Sciatic nerve (tissue), 2 donors: ENCODE measurements at regions of chr10 and their contacts with region 1.

Region 1: GRCh38 chr10:3180355-3181025 is 7.9 kb upstream of the PITRM1 start:
- DNase-seq: no peak
- ATAC-seq: no peak

Region 2: GRCh38 chr10:3293581-3294431 is 113.3 kb after region 1 on chr10:
- intact Hi-C with region 1: no loop called
- DNase-seq: no peak
- ATAC-seq: peak; percentile 36

Region 3: GRCh38 chr10:3951993-3952392 is 771.5 kb after region 1 on chr10:
- intact Hi-C with region 1: loop called (anchors 2 kb)
- DNase-seq: no peak
- ATAC-seq: peak; percentile 72